Activated B cell treated with CpG ODN at 0.5 μM for 24 hours (primary cell): ENCODE measurements at regions of chr19 and their contacts with region 1.

Region 1: GRCh38 chr19:11242864-11243797 is 3.7 kb downstream of the ANGPTL8 start:
- DNase-seq: peak; percentile 84
- ATAC-seq: peak; percentile 100
- H3K4me3 Mint-ChIP-seq: peak overlapping the region; percentile 15
- H3K27ac Mint-ChIP-seq: no peak overlapping the region
- H3K4me1 Mint-ChIP-seq: peaks cover 6% of the 10 kb centered on the region
- H3K27me3 Mint-ChIP-seq: peaks cover 2% of the 10 kb centered on the region
- CTCF ChIP-seq: peak; percentile 48

Region 2: DNA sequence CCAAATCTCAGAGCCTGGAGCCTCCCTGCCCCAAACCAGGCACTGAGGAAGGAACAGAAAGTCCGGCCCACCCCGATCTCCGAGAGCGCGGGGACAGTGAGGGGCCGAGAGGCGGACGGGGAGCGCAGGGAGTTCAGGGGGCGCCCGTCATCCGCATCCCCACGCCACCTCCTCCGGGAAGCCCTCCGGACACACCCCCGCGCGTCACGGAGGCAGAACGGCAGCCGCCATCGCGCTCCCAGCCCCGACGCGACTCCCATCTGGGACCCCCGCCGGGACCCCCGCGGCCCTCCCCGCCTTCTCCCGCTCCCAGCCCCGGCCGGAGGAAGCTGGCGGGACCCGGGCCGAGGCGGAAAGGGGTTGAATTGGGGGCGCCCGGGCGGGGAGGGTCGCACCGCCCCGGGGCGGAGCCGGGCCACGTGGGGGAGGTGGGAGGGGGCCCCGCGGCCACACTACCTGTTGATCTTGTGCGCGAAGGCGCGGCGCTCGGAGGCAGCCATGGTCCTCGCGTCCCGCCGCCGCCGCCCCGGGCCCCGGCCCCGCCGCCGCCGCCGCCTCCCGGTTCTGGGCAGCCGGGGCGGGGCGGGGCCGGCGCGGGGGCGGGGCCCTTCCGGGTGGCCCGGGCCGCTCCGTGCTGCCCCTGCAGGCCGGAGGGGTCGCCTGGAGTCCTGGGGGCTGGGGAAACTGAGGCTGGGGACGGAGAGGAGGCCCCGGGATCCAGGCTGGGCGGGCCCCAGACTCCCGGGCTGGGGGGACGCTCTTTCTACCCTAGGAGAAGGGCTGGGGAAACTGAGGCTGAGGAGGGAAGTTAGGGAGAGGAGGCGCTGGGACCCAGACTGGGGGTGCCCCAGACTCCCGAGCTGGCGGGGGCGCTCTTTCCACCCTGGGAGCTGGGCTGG is 19.1 kb after region 1 on chr19 and contains the start of gene DOCK6:
- CTCF ChIA-PET with region 1: no interaction called
- POLR2A ChIA-PET with region 1: no interaction called
- intact Hi-C with region 1: loop called (anchors 2 kb)
- DNase-seq: peak; percentile 37
- ATAC-seq: peak; percentile 78
- H3K4me3 Mint-ChIP-seq: peak within 1 kb of the TSS; percentile 81
- H3K27ac Mint-ChIP-seq: no peak within 1 kb of the TSS
- H3K4me1 Mint-ChIP-seq: peaks cover 7% of the 10 kb centered on the region
- H3K27me3 Mint-ChIP-seq: peaks cover 3% of the 10 kb centered on the region
- CTCF ChIP-seq: no peak
- total RNA-seq, gene DOCK6: 7.7 and 9.6 TPM in 2 replicates

Region 3: GRCh38 chr19:11446652-11447301 is 203.6 kb after region 1 on chr19:
- CTCF ChIA-PET with region 1: no interaction called
- POLR2A ChIA-PET with region 1: no interaction called
- intact Hi-C with region 1: loop called (anchors 1 kb)
- DNase-seq: peak; percentile 61
- ATAC-seq: peak; percentile 81
- H3K4me3 Mint-ChIP-seq: no peak overlapping the region
- H3K27ac Mint-ChIP-seq: no peak overlapping the region
- H3K4me1 Mint-ChIP-seq: peaks cover 3% of the 10 kb centered on the region
- H3K27me3 Mint-ChIP-seq: no peaks in the 10 kb centered on the region
- CTCF ChIP-seq: no peak

Region 4: DNA sequence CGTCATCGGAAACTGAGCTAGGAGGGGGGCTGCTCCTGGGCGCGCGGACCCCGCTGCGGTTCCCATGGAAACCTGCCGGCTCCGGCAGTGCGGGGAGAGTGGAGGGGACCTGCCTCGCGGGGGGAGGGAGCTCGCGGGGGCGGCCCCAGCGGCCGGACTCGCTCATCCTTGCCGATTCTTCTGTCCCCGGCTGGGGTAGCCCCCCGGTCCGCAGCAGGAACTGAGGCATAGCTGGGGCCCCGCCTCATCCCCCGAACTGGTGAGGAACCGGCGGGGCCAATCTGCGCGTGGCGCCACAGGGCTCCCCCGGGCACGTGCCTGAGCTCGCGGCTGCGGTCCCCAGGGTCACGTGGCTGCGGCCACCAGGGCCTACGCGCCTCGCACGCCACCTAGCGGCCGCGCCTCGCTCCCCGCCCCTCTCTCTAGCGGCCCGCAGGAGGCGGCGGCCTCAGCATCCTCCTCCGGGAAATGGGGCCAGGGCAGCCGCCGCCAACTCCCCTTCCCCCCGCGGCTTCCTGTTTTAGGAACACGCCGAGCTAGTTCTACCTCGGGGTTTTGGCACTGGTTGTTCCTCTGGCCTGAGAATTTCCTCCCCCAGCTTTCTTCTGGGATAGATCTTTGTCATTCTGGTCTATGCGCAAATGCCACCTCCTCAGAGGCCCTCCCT is 239.4 kb after region 1 on chr19:
- CTCF ChIA-PET with region 1: interaction called, 6 read pairs
- POLR2A ChIA-PET with region 1: no interaction called
- intact Hi-C with region 1: loop called (anchors 1 kb)
- DNase-seq: peak; percentile 85
- ATAC-seq: peak; percentile 72
- H3K4me3 Mint-ChIP-seq: peak overlapping the region; percentile 74
- H3K27ac Mint-ChIP-seq: peak overlapping the region; percentile 41
- H3K4me1 Mint-ChIP-seq: peaks cover 30% of the 10 kb centered on the region
- H3K27me3 Mint-ChIP-seq: peaks cover 23% of the 10 kb centered on the region
- CTCF ChIP-seq: no peak